ENCODE measurements at regions of chr3 and their contacts with region 1.

Region 1: DNA sequence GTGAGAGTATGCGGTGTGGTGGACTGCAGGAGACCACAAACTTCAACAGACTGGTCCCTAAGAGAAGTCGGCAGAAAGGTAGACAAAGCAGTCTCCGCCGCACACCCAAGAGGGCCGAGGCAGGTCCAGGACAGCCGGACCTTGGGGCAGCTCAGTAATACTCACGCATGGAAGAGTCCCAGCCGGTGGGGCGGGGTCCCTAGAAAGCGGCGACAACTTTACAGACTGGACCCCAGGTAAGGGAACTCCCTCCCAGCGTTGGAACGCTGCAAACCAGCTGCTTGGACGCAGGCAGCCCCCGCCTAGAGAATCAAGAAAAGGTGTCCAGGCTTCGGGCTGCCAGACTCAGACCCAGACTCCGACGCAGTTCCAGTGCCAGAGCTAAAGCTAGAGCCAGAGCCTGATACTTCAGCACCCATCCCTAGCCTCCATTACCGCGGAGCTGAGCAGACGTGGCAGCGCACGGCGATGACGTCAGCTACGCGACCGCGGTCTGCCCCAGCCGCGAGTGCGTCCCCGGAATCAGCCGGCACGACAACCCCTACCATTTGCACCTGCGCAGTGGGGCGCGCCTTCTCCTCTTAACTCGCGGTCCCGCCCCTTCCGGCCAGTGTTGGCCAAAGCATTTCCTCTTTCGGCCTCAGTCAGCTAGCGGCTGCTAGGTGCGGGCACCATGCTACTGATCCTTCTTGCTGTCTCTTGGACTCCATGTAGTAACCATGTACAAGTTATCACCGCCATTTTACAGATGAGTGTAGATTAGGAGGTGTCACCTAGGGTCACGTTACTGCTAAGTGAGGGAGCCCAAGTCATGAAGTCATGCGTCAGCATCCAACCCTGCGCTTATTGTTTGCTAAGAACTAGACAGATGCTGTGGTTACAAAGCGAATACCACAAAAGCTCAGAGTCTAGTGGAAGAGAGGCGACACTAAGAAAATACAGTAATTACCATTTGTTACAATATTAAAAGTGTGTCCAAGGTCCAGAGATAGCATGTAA is at the start of gene TMEM39A:
- DNase-seq: peak; percentile 98 to 99 (median 99)
- H3K4me3 ChIP-seq: peak within 1 kb of the TSS; percentile 91 to 98
- H3K4me3 Mint-ChIP-seq: peak within 1 kb of the TSS; percentile 93 to 97 (median 95)
- H3K27ac ChIP-seq: peak within 1 kb of the TSS; percentile 91
- H3K27ac Mint-ChIP-seq: peak within 1 kb of the TSS; percentile 98 to 99 (median 99)
- H3K4me1 ChIP-seq: peaks cover 33% of the 10 kb centered on the region
- H3K4me1 Mint-ChIP-seq: peaks cover 24 to 58% (median 38%) of the 10 kb centered on the region in 4 donors
- H3K27me3 ChIP-seq: no peaks in the 10 kb centered on the region
- H3K27me3 Mint-ChIP-seq: peaks cover 0 to 2% of the 10 kb centered on the region in 2 donors
- total RNA-seq, gene TMEM39A: 46.1 to 47.4 TPM

Region 2: DNA sequence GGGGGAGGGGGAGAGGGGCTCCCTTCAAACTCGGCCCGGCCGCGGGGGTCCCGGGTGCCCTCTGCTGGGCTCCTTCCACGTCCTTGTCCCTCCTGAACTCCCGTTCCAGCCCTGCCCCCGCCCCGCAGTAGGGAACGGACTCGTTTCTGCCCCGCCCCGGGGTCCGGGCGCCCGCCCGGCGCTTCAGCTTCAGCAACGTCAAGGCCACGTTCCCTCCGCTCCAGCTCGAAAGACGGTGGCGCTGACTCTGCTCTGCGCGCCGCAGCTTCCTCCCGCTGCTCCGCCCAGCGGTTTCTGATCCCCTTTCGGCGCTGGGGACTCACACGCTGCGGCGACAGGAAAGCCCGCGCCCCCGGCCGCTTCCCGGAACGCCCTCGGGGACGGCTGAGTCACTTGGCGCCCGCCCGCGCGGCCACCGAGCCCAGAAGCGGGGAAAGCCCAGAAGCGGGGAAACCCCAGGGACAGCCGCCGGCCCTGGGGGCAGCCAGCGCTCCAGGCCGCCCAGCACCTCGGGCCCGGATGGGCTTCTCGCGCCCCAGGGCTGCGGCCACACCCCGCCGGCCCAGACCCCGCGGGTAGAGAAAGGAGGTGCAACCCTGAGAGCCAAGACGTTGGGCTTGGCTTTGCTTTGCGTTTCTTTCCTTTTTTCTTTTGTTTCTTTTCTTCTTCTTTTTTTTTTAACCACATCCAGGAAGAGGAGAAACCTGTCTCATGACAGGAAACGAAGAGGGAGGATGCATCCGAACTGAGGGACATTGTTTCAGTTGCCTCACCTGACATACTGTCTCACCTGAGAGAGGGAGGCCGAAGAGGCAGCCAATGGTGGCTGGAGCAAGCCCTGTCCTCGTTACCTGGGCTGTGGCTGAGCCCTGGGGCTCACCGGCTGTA is 140.4 kb before region 1 on chr3:
- CTCF ChIA-PET with region 1: no interaction called
- POLR2A ChIA-PET with region 1: interaction called, 6 read pairs
- intact Hi-C with region 1: loop called (anchors 2 kb)
- DNase-seq: peak; percentile 87 to 95 (median 89)
- H3K4me3 ChIP-seq: peak overlapping the region; percentile 20 to 73
- H3K4me3 Mint-ChIP-seq: peak overlapping the region; percentile 88 to 96 (median 90)
- H3K27ac ChIP-seq: peak overlapping the region; percentile 75
- H3K27ac Mint-ChIP-seq: peak overlapping the region; percentile 93 to 99 (median 97)
- H3K4me1 ChIP-seq: peaks cover 19% of the 10 kb centered on the region
- H3K4me1 Mint-ChIP-seq: peaks cover 13 to 38% (median 27%) of the 10 kb centered on the region in 4 donors
- H3K27me3 ChIP-seq: no peaks in the 10 kb centered on the region
- H3K27me3 Mint-ChIP-seq: no peaks in the 10 kb centered on the region

Region 3: GRCh38 chr3:119428538-119428937 is 34.9 kb before region 1 on chr3:
- CTCF ChIA-PET with region 1: no interaction called
- POLR2A ChIA-PET with region 1: no interaction called
- intact Hi-C with region 1: no loop called
- DNase-seq: no peak
- H3K4me3 ChIP-seq: no peak overlapping the region
- H3K4me3 Mint-ChIP-seq: no peak overlapping the region
- H3K27ac ChIP-seq: no peak overlapping the region
- H3K27ac Mint-ChIP-seq: no peak overlapping the region
- H3K4me1 ChIP-seq: no peaks in the 10 kb centered on the region
- H3K4me1 Mint-ChIP-seq: no peaks in the 10 kb centered on the region
- H3K27me3 ChIP-seq: no peaks in the 10 kb centered on the region
- H3K27me3 Mint-ChIP-seq: no peaks in the 10 kb centered on the region

Region 4: DNA sequence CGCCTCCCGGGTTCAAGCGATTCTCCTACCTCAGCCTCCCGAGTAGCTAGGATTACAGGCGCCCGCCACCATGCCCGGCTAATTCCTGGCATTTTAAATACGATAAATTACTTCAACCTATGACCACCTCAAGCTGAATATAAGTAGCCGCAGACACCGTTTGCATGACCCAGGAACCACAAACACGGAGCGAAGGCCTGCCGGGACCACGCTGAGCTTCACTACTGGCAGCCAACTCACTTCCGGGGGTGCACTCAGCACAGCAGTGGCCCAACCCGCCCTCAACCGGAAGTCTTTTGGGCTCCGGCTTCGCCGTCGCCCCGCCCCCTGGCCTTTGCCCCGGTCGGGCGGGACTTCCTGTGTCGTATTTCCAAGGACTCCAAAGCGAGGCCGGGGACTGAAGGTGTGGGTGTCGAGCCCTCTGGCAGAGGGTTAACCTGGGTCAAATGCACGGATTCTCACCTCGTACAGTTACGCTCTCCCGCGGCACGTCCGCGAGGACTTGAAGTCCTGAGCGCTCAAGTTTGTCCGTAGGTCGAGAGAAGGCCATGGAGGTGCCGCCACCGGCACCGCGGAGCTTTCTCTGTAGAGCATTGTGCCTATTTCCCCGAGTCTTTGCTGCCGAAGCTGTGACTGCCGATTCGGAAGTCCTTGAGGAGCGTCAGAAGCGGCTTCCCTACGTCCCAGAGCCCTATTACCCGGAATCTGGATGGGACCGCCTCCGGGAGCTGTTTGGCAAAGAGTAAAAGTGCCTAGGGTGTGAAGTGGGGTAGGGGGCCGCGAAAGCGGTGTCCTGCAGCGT is 34.9 kb after region 1 on chr3 and contains the start of gene TIMMDC1:
- CTCF ChIA-PET with region 1: interaction called, 6 read pairs
- POLR2A ChIA-PET with region 1: interaction called, 204 read pairs
- intact Hi-C with region 1: loop called (anchors 1 kb)
- DNase-seq: peak; percentile 96 to 98 (median 97)
- H3K4me3 ChIP-seq: peak within 1 kb of the TSS; percentile 82 to 93
- H3K4me3 Mint-ChIP-seq: peak within 1 kb of the TSS; percentile 98 to 100 (median 99)
- H3K27ac ChIP-seq: peak within 1 kb of the TSS; percentile 92
- H3K27ac Mint-ChIP-seq: peak within 1 kb of the TSS; percentile 99 to 100 (median 100)
- H3K4me1 ChIP-seq: peaks cover 31% of the 10 kb centered on the region
- H3K4me1 Mint-ChIP-seq: peaks cover 13 to 42% (median 33%) of the 10 kb centered on the region in 4 donors
- H3K27me3 ChIP-seq: no peaks in the 10 kb centered on the region
- H3K27me3 Mint-ChIP-seq: no peaks in the 10 kb centered on the region
- total RNA-seq, gene TIMMDC1: 72.3 to 80.9 TPM

Region 5: DNA sequence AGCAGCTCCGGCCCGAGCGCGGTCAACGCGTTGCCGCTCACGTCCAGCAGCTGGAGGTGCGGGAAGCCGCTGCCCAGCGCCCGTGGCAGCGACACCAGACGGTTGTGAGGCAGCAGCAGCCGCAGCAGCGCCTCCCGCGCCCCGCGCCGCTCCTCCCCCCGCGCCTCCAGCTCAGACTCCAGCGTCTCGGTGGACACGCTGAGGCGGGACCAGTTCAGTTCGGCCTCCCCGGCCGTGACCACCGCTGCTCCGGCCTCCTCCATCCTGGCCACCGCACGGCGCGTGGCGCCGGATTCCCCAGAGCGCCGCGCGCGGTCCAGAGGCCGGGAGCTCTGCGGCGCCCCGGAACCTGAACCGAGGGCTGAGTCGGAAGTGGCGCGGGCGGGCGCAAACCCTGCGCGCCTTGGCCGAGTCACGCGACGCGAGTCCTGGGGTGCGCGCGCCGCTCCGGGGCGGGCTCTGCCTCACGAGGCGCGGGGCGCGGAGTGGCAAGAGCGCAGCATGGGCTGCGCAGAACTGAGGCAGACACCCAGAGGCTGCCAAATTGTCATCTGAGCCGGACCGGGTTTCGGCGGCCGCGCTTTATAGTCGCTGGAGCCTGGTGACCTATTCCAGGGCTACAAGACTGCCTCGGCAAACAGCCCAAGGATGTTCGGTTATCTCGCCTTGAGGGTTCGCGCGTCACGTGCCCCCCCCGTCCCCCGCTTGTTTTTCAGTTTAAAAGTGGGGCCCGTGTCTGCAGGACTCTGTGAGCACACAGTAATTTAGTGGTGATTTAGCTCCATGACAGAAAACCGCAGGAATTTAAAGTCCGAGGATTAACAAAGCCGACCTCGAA is 885.7 kb after region 1 on chr3 and contains the start of gene LRRC58:
- CTCF ChIA-PET with region 1: no interaction called
- POLR2A ChIA-PET with region 1: interaction called, 10 read pairs
- intact Hi-C with region 1: loop called (anchors 10 kb)
- DNase-seq: peak; percentile 86 to 93 (median 93)
- H3K4me3 ChIP-seq: peak within 1 kb of the TSS; percentile 67 to 91
- H3K4me3 Mint-ChIP-seq: peak within 1 kb of the TSS; percentile 88 to 95 (median 93)
- H3K27ac ChIP-seq: peak within 1 kb of the TSS; percentile 77
- H3K27ac Mint-ChIP-seq: peak within 1 kb of the TSS; percentile 87 to 96 (median 92)
- H3K4me1 ChIP-seq: peaks cover 46% of the 10 kb centered on the region
- H3K4me1 Mint-ChIP-seq: peaks cover 36 to 50% (median 43%) of the 10 kb centered on the region in 4 donors
- H3K27me3 ChIP-seq: no peaks in the 10 kb centered on the region
- H3K27me3 Mint-ChIP-seq: peaks cover 2% of the 10 kb centered on the region in 2 donors
- total RNA-seq, gene LRRC58: 23.0 to 23.6 TPM

Region 6: GRCh38 chr3:120596116-120596852 is 1132.8 kb after region 1 on chr3 and contains the start of gene NDUFB4:
- CTCF ChIA-PET with region 1: no interaction called
- POLR2A ChIA-PET with region 1: no interaction called
- intact Hi-C with region 1: loop called (anchors 2 kb)
- DNase-seq: peak; percentile 89 to 96 (median 96)
- H3K4me3 ChIP-seq: peak within 1 kb of the TSS; percentile 97 to 99
- H3K4me3 Mint-ChIP-seq: peak within 1 kb of the TSS; percentile 91 to 98 (median 95)
- H3K27ac ChIP-seq: peak within 1 kb of the TSS; percentile 98
- H3K27ac Mint-ChIP-seq: peak within 1 kb of the TSS in 6 of 7 donors; percentile 96 to 99 (median 98)
- H3K4me1 ChIP-seq: peaks cover 30% of the 10 kb centered on the region
- H3K4me1 Mint-ChIP-seq: peaks cover 6 to 8% (median 7%) of the 10 kb centered on the region in 4 donors
- H3K27me3 ChIP-seq: no peaks in the 10 kb centered on the region
- H3K27me3 Mint-ChIP-seq: no peaks in the 10 kb centered on the region
- total RNA-seq, gene NDUFB4: 82.1 to 82.8 TPM